T-cell (primary cell): ENCODE measurements at regions of chr1 and their contacts with region 1.

Region 1: GRCh38 chr1:172826096-172826743 is 167.3 kb downstream of the FASLG start:
- DNase-seq: peak in 1 of 35 experiments; percentile 38
- ATAC-seq: peak in 3 of 4 experiments; percentile 15 to 58 (median 39)
- H3K4me3 ChIP-seq: no peak overlapping the region
- H3K4me3 Mint-ChIP-seq: no peak overlapping the region
- H3K27ac ChIP-seq: no peak overlapping the region
- H3K27ac Mint-ChIP-seq: no peak overlapping the region
- H3K4me1 ChIP-seq: no peaks in the 10 kb centered on the region
- H3K4me1 Mint-ChIP-seq: peaks cover 0 to 5% (median 0%) of the 10 kb centered on the region in 3 donors
- H3K27me3 ChIP-seq: no peaks in the 10 kb centered on the region
- H3K27me3 Mint-ChIP-seq: no peaks in the 10 kb centered on the region

Region 2: GRCh38 chr1:172960454-172961208 is 134.4 kb after region 1 on chr1:
- CTCF ChIA-PET with region 1: no interaction called
- POLR2A ChIA-PET with region 1: interaction called in 1 of 2 experiments, 11 read pairs
- DNase-seq: no peak
- ATAC-seq: no peak
- H3K4me3 ChIP-seq: no peak overlapping the region
- H3K4me3 Mint-ChIP-seq: no peak overlapping the region
- H3K27ac ChIP-seq: no peak overlapping the region
- H3K27ac Mint-ChIP-seq: no peak overlapping the region
- H3K4me1 ChIP-seq: no peaks in the 10 kb centered on the region
- H3K4me1 Mint-ChIP-seq: peaks cover 0 to 7% (median 3%) of the 10 kb centered on the region in 3 donors
- H3K27me3 ChIP-seq: no peaks in the 10 kb centered on the region
- H3K27me3 Mint-ChIP-seq: no peaks in the 10 kb centered on the region